ENCODE measurements at regions of chr11 and their contacts with region 1.

Region 1: GRCh38 chr11:1050581-1051355 is 14.2 kb upstream of the MUC6 start:
- DNase-seq: peak; percentile 17 to 83 (median 68)

Region 2: DNA sequence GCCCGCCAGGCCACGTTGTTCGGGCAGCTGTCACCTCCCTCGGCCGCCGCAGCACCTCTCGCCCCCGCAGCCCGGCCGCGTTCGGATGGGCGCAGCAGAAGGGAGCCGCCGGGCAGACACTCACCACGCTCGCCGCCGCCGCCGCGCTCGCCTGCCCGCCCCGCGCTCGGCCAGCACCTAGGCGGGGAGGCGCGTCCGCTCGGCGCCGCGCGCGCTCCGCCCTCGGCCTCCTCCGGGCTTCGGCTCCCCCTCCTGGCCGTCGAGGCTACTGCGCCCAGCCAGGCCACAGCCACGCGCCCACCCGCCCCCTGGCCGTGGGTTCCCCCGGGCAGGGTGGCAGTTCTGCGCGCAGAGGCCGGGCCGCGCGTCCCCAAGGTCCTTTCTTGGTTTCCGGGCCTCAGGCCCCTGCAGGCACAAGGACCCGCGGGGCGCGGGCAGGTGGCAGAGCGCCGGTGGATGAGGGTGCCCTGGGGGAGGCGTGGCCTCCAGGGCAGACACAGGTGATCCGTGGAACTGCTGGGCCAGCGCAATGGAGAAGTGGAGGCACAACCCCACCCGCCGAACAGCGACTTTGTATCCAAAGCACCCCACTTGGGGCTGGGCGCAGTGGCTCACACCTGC is 252.6 kb before region 1 on chr11 and contains the start of gene SLC25A22:
- intact Hi-C with region 1: no loop called
- DNase-seq: peak in 40 of 42 donors; percentile 62 to 91 (median 82)

Region 3: DNA sequence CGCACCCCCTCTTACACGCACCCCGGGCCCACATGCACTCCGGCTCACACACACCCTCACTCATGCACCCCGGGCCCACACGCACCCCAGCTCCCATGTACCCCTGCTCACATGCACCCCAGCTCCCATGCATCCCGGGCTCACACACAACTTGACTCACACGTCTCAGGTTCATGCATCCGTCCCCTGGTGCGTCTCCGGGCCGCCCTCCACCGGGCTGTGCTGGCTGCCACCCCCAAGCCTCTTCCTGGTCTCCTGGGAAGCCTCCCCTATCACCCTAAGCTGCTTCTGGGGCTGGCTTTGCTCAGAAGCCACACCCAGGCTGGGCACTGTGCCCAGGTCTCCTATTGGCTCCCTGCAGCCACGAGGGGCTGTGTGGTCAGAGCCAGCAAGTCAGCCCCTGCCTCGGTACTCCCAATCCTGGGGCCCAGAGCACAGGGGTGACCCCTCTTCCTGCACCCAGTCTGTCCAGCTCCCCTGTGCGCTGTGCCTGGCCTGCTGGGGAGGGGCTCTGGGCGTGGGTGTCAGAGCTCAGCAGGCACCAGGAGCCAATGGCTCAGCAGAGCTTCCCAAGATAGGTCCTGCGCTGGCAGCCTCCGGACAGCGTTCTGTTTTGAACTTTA is 191.1 kb before region 1 on chr11:
- intact Hi-C with region 1: loop called (anchors 10 kb)
- DNase-seq: peak in 40 of 42 donors; percentile 33 to 89 (median 65)